PC-9 (cell line): ENCODE measurements at regions of chr6 and their contacts with region 1.

Region 1: GRCh38 chr6:42075159-42075838 is 25.0 kb downstream of the TAF8 start:
- DNase-seq: peak; percentile 72 to 87
- H3K4me3 ChIP-seq: no peak overlapping the region
- H3K27ac ChIP-seq: no peak overlapping the region
- H3K4me1 ChIP-seq: 0 out of 2 replicates have a peak, but pooled peaks cover 4% of the 10 kb centered on the region
- H3K27me3 ChIP-seq: no peaks in the 10 kb centered on the region
- CTCF ChIP-seq: peak; percentile 95

Region 2: GRCh38 chr6:42200035-42200434 is 124.7 kb after region 1 on chr6:
- CTCF ChIA-PET with region 1: no interaction called
- POLR2A ChIA-PET with region 1: interaction called, 35 read pairs
- intact Hi-C with region 1: no loop called
- DNase-seq: no peak
- H3K4me3 ChIP-seq: no peak overlapping the region
- H3K27ac ChIP-seq: no peak overlapping the region
- H3K4me1 ChIP-seq: peaks cover 7% of the 10 kb centered on the region
- H3K27me3 ChIP-seq: no peaks in the 10 kb centered on the region
- CTCF ChIP-seq: no peak

Region 3: GRCh38 chr6:42224222-42224989 is 149.1 kb after region 1 on chr6:
- CTCF ChIA-PET with region 1: no interaction called
- POLR2A ChIA-PET with region 1: no interaction called
- intact Hi-C with region 1: no loop called
- DNase-seq: peak; percentile 20 to 97
- H3K4me3 ChIP-seq: peak overlapping the region; percentile 61
- H3K27ac ChIP-seq: peak overlapping the region; percentile 99
- H3K4me1 ChIP-seq: peaks cover 97% of the 10 kb centered on the region
- H3K27me3 ChIP-seq: no peaks in the 10 kb centered on the region
- CTCF ChIP-seq: no peak

Region 4: GRCh38 chr6:42547407-42548329 is 472.4 kb after region 1 on chr6:
- CTCF ChIA-PET with region 1: no interaction called
- POLR2A ChIA-PET with region 1: no interaction called
- intact Hi-C with region 1: loop called (anchors 5 kb)
- DNase-seq: peak in 1 of 2 experiments; percentile 83
- H3K4me3 ChIP-seq: peak overlapping the region; percentile 51; the same call in 1 of the 2 replicates
- H3K27ac ChIP-seq: no peak overlapping the region
- H3K4me1 ChIP-seq: no peaks in the 10 kb centered on the region
- H3K27me3 ChIP-seq: no peaks in the 10 kb centered on the region
- CTCF ChIP-seq: peak; percentile 96